GM13977 (cell line): ENCODE measurements at regions of chr14 and their contacts with region 1.

Region 1: GRCh38 chr14:76956316-76957090 is 72.0 kb downstream of the IRF2BPL start:
- DNase-seq: peak; percentile 59
- CTCF ChIP-seq: no peak

Region 2: DNA sequence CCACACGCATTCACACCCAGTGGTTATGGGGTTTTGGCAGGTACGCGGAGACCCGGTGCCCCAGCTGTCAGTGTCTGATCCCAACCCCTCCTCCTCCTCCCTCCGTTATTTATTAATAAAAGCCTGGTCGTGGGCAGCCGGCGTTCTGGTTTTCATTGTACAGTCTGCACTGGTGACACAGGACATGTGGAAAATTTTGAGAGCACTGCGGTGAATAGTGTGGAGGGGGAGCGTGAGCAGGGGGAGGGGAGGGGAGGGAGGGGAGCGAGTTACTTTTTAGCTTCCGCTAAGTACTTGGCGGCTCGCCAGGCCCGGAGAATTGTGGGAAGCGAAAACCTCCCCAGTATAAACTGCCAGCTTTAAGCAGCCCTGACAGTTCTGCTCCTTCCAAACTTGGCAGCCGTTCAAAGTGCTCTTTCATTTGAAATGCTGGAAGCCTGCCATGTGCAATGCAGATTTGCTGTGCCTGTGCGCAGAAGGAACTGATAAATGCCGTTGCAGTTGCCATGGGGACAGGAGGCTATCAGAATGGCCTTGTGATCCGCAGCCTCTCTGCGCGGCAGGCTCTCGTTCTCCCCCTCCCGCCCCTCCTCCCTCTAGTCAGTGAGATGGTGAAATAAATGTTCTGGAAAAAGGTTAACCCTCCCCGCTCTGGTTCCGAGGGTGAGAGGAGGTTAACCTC is 83.7 kb after region 1 on chr14:
- in situ Hi-C with region 1: loop called (anchors 10 kb)
- DNase-seq: peak; percentile 79
- CTCF ChIP-seq: no peak